Calu3 (cell line): ENCODE measurements at regions of chr11 and their contacts with region 1.

Region 1: DNA sequence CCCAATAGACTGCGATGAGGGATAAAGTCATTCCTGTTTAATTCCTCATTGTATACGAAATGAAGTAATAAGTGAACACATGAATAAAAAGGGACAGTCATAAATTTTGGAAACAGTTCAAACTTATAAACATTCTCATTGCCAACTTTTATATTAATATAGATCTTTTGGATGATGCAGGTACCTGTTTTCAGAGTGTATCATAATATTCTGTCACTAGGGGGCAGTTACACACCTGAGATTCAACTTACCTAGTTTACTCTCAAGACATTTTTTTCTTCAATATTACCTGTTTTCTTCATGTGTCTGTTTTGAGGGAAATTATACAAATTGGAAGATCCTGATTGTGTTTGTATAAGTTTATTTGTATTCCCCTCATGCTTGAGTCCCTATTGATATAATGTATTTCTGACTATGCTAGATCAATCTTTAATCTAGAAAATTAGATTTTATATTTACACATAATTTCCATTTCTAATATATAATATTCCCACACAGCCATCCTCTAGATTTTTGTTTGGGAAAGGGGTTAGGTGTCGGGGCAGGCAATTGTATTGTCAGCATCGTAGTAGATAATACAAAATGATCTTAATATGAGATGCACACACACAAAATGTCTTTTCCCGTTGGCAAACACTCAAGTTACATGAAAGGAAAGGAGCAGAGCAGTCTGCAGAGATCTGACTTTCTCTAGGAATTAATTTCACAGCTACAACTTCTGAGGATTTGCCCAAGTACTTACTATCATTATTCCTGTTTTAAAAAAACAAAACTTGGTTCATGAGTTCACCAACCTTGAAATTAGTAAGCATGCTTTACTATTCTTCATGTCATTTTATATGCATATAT is 18.4 kb downstream of the FDX1 start:
- DNase-seq: no peak
- H3K4me3 Mint-ChIP-seq: no peak overlapping the region
- H3K27ac Mint-ChIP-seq: no peak overlapping the region
- H3K4me1 Mint-ChIP-seq: no peaks in the 10 kb centered on the region
- H3K27me3 Mint-ChIP-seq: no peaks in the 10 kb centered on the region
- CTCF ChIP-seq: peak; percentile 35

Region 2: GRCh38 chr11:110253525-110253924 is 194.6 kb before region 1 on chr11:
- CTCF ChIA-PET with region 1: no interaction called
- intact Hi-C with region 1: no loop called
- DNase-seq: no peak
- H3K4me3 Mint-ChIP-seq: no peak overlapping the region
- H3K27ac Mint-ChIP-seq: no peak overlapping the region
- H3K4me1 Mint-ChIP-seq: no peaks in the 10 kb centered on the region
- H3K27me3 Mint-ChIP-seq: no peaks in the 10 kb centered on the region
- CTCF ChIP-seq: no peak

Region 3: DNA sequence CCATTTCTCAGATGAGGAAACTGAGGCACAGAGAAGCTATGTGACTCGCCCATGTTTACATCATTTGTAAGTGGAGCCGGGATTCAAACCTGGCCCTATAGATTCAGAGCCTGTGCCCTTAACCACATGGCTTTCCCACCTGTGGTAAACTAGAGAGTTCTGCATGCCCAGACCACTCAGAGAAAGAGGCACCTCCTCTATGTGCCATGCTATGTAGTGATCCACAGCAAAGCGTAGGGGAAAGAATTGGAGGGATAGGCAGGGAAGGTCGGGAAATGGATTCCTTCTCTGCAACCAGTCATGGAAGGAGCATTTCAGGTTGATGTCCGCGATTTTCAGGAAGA is 782.0 kb after region 1 on chr11:
- CTCF ChIA-PET with region 1: no interaction called
- intact Hi-C with region 1: loop called (anchors 1 kb)
- DNase-seq: no peak
- H3K4me3 Mint-ChIP-seq: peak overlapping the region; percentile 64
- H3K27ac Mint-ChIP-seq: no peak overlapping the region
- H3K4me1 Mint-ChIP-seq: no peaks in the 10 kb centered on the region
- H3K27me3 Mint-ChIP-seq: no peaks in the 10 kb centered on the region
- CTCF ChIP-seq: no peak